ENCODE measurements at regions of chr7 and their contacts with region 1.

Region 1: DNA sequence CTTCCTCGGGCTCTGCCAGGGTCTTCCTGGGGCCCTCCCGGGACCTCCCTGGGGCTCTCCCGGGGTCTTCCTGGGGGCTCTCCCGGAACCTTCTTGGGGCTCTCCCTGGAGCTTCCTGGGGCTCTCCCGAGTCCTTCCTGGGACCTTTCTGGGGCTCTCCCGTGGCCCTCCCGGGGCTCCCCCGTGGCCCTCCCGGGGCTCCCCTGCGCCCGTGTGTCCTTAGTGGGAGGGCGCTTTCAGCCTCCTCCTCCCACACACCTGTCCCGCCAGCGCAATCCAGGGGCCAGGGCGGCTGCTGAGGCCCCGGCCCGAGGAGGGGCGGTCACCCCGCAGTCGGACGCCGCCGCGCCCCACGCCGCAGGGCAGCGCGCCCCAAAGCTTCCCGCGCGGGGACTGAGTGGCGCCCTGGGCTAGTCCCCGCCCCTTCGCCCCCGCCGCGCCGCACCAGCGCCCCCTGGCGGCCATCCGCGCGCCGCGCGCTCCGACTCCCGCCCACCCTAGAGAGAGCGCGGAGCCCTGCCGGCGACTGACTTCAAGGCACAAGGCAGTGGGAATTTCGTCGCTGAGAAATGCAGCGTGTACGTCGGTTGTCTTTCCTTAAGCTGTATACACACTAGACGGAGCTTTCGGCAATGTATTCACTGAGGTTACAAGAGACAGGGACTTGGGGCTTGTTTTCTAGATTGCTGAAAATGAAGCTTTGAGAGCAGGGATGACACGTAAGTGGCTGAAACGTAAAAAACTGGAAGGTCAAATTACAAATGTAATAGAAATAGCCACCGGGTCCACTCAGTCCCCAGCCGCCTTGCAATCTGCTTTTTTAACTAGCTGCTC is 47.1 kb downstream of the INSIG1 start:
- DNase-seq: peak; percentile 83
- ATAC-seq: peak; percentile 98
- H3K4me3 Mint-ChIP-seq: peak overlapping the region; percentile 48
- H3K27ac Mint-ChIP-seq: no peak overlapping the region
- H3K4me1 Mint-ChIP-seq: peaks cover 8% of the 10 kb centered on the region
- H3K27me3 Mint-ChIP-seq: peaks cover 26% of the 10 kb centered on the region

Region 2: GRCh38 chr7:154913638-154914312 is 431.0 kb before region 1 on chr7:
- CTCF ChIA-PET with region 1: interaction called, 17 read pairs
- POLR2A ChIA-PET with region 1: no interaction called
- DNase-seq: peak; percentile 88
- ATAC-seq: peak; percentile 99
- H3K4me3 Mint-ChIP-seq: peak overlapping the region; percentile 55
- H3K27ac Mint-ChIP-seq: no peak overlapping the region
- H3K4me1 Mint-ChIP-seq: peaks cover 4% of the 10 kb centered on the region
- H3K27me3 Mint-ChIP-seq: peaks cover 8% of the 10 kb centered on the region

Region 3: DNA sequence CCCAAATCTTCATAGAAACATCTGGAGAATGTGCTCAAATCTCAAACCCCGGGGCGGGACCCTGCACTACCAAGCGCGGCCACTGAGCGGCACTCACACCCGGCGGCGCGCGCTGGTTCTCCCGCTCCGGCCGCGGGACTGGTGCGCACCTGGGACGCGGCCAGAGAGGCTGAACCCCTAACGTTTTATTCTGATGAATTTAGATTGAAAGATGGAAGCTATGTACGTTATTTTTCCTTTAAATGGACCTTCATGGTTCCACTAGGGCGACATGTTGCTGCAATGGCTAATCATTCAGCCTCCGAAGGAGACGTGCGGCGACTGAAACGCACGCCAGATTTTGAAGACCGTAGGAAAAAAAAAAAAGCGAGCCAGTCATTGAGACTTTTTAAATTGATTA is 154.1 kb before region 1 on chr7:
- CTCF ChIA-PET with region 1: interaction called, 26 read pairs
- POLR2A ChIA-PET with region 1: no interaction called
- DNase-seq: peak; percentile 66
- ATAC-seq: peak; percentile 64
- H3K4me3 Mint-ChIP-seq: no peak overlapping the region
- H3K27ac Mint-ChIP-seq: no peak overlapping the region
- H3K4me1 Mint-ChIP-seq: peaks cover 21% of the 10 kb centered on the region
- H3K27me3 Mint-ChIP-seq: no peaks in the 10 kb centered on the region

Region 4: GRCh38 chr7:155380221-155380861 is 35.5 kb after region 1 on chr7:
- CTCF ChIA-PET with region 1: no interaction called
- POLR2A ChIA-PET with region 1: no interaction called
- DNase-seq: peak; percentile 80
- ATAC-seq: peak; percentile 87
- H3K4me3 Mint-ChIP-seq: no peak overlapping the region
- H3K27ac Mint-ChIP-seq: no peak overlapping the region
- H3K4me1 Mint-ChIP-seq: peaks cover 30% of the 10 kb centered on the region
- H3K27me3 Mint-ChIP-seq: peaks cover 80% of the 10 kb centered on the region

Region 5: DNA sequence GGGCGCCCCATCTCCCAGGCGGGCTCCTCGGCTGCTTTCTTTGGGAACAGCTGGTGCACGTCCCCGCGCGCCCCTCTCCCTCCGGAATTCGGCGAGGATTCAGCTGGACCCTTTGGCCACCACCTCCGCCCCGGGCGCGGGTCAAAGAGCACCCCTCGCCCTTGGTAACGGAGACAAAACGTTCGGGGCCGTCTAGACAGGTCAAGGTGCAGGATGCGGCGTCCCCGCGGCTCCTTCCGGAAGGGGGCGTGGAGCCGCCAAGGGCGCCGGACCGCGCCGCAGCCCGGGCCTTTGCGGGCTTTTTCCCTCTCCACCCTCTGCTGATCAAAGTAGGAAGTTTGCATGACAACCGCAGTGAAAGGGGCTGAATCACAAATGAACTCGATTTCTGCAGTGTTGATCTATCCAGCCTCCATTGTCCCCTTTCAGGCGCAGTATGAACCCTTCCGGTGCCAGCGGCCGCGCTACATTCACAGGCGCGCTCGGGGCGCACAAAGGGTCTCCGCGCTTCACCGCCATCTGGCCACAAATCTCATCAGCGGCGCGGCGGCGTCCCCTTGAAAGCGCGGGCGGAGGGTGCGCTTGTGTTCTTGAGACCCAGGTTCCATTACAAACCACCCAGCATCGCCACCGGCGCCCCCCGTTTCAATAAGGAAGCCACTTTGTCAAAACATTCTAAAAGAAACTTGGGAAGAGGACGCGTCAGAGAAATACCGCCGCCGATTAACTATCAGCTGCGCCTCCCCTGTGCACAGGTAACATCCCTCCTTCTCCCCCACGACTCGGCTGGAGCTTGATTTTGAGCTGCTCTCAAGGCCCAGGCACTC is 165.1 kb after region 1 on chr7:
- CTCF ChIA-PET with region 1: no interaction called
- POLR2A ChIA-PET with region 1: no interaction called
- DNase-seq: no peak
- ATAC-seq: peak; percentile 36
- H3K4me3 Mint-ChIP-seq: peak overlapping the region; percentile 57
- H3K27ac Mint-ChIP-seq: peak overlapping the region; percentile 63
- H3K4me1 Mint-ChIP-seq: peaks cover 18% of the 10 kb centered on the region
- H3K27me3 Mint-ChIP-seq: peaks cover 71% of the 10 kb centered on the region